HepG2 (cell line): ENCODE measurements at regions of chr5 and their contacts with region 1.

Region 1: GRCh38 chr5:57692582-57693487 is 210.2 kb upstream of the ACTBL2 start:
- DNase-seq: peak; percentile 92
- ATAC-seq: peak; percentile 95
- H3K4me3 ChIP-seq: no peak overlapping the region; a peak in 1 of 6 replicates
- H3K27ac ChIP-seq: peak overlapping the region; percentile 85
- H3K4me1 ChIP-seq: peaks cover 49% of the 10 kb centered on the region
- H3K27me3 ChIP-seq: no peaks in the 10 kb centered on the region
- CTCF ChIP-seq: no peak
- EP300 ChIP-seq: peak; percentile 38 to 82; a peak in 2 of 4 replicates
- POLR2A ChIP-seq: no peak
- RAD21 ChIP-seq: no peak

Region 2: GRCh38 chr5:57173185-57174127 is 519.4 kb before region 1 on chr5 and contains the start of gene GPBP1:
- CTCF ChIA-PET with region 1: no interaction called
- POLR2A ChIA-PET with region 1: no interaction called
- in situ Hi-C with region 1: no loop called
- intact Hi-C with region 1: loop called (anchors 10 kb)
- DNase-seq: peak; percentile 96
- ATAC-seq: peak; percentile 85
- H3K4me3 ChIP-seq: peak within 1 kb of the TSS; percentile 90 to 94 (median 94)
- H3K27ac ChIP-seq: peak within 1 kb of the TSS; percentile 97
- H3K4me1 ChIP-seq: peaks cover 9% of the 10 kb centered on the region
- H3K27me3 ChIP-seq: no peaks in the 10 kb centered on the region; a peak in 1 of 5 replicates
- CTCF ChIP-seq: peak; percentile 47
- EP300 ChIP-seq: 0 out of 4 replicates have a peak, but pooled peaks of 1 of the 2 experiments have one; percentile 37
- POLR2A ChIP-seq: peak; percentile 50 to 79
- RAD21 ChIP-seq: peak; percentile 45; the same call in 1 of the 2 replicates
- total RNA-seq, gene GPBP1: 72.2 and 101 TPM in 2 replicates

Region 3: DNA sequence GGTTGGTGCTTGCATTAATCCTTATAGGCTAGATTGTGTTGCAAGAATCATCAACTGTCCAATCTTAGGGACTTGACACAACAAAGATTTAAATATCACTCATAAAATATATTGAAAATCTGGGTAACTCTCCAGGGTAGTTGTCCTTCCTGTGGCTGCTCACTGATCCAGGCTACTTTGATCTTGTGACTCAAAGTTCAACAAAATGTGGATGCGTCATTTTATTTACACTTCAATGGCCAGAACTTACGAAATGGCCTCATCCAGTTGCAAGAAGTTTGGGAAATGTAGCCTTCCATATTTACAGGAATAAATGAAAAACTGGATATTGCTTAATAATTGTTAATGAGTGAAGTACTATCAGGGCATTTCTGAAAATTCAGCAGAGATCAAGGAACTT is 25.3 kb after region 1 on chr5:
- CTCF ChIA-PET with region 1: no interaction called
- POLR2A ChIA-PET with region 1: no interaction called
- in situ Hi-C with region 1: no loop called
- intact Hi-C with region 1: loop called (anchors 1 kb)
- DNase-seq: peak; percentile 85
- ATAC-seq: peak; percentile 80
- H3K4me3 ChIP-seq: no peak overlapping the region
- H3K27ac ChIP-seq: no peak overlapping the region
- H3K4me1 ChIP-seq: peaks cover 24% of the 10 kb centered on the region
- H3K27me3 ChIP-seq: no peaks in the 10 kb centered on the region
- CTCF ChIP-seq: no peak
- EP300 ChIP-seq: peak; percentile 63 to 87; a peak in 3 of 4 replicates
- POLR2A ChIP-seq: no peak
- RAD21 ChIP-seq: no peak